Adrenal gland (tissue), 19 donors: ENCODE measurements at regions of chr7 and their contacts with region 1.

Region 1: GRCh38 chr7:92609921-92610518 is 19.8 kb upstream of the FAM133B start:
- DNase-seq: no peak
- H3K4me3 ChIP-seq: no peak overlapping the region
- H3K27ac ChIP-seq: no peak overlapping the region
- H3K4me1 ChIP-seq: peaks cover 15 to 39% of the 10 kb centered on the region in 2 donors
- H3K27me3 ChIP-seq: no peaks in the 10 kb centered on the region
- CTCF ChIP-seq: peak in 5 of 6 experiments; percentile 29 to 52 (median 47)
- POLR2A ChIP-seq: no peak

Region 2: GRCh38 chr7:92590711-92591310 is 19.2 kb before region 1 on chr7:
- intact Hi-C with region 1: loop called in 1 of 2 experiments (anchors 2 kb)
- DNase-seq: no peak
- H3K4me3 ChIP-seq: peak overlapping the region in 2 of 4 donors; percentile 76 to 79
- H3K27ac ChIP-seq: peak overlapping the region in 1 of 5 donors; percentile 92
- H3K4me1 ChIP-seq: peaks cover 22 to 38% of the 10 kb centered on the region in 2 donors
- H3K27me3 ChIP-seq: no peaks in the 10 kb centered on the region
- CTCF ChIP-seq: no peak
- POLR2A ChIP-seq: no peak